A549 (cell line): ENCODE measurements at regions of chr2 and their contacts with region 1.

Region 1: GRCh38 chr2:85420536-85421259 is 2.2 kb downstream of the SH2D6 start:
- DNase-seq: peak; percentile 92 to 97
- ATAC-seq: peak; percentile 57 to 70
- H3K4me3 ChIP-seq: peak overlapping the region; percentile 16; the same call in 1 of the 3 replicates
- H3K27ac ChIP-seq: peak overlapping the region; percentile 96 to 98
- H3K4me1 ChIP-seq: peaks cover 44% of the 10 kb centered on the region
- CTCF ChIP-seq: peak; percentile 99
- EP300 ChIP-seq: no peak
- POLR2A ChIP-seq: no peak
- RAD21 ChIP-seq: peak; percentile 100

Region 2: DNA sequence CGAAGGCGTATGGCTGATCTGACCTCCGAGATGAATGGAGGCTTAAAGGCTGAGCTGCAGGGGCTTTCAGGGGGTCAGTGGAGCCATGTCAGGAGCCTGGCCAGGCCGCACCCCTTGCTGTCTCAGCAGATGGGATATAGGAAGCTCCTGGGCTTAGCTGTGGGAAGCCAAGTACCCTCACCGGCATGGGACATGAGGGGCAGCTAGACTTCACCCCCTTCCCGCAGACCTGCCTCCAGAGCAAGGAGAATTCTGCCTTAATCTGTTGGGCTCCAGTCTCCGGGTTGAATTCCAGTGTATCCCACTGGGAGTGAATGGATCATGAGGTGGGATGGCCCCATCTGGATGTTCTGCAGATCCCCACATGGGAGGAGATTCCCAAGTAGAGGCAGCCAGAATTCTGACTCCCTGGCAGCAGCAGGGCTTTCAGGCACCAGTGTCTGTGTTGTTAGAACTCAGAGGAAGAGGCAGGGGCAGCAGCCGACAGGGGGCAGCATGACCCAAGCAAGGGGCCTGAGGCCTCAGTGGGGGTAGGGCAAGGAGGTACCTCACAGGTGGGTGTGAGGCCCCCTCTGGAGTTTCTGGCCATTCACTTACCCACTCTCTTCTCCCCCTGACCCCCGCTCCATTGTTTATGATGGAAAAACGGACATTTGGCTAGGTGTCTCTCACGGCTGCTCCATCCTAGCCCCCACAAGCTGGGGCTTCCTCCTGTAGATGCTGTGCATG is 29.6 kb before region 1 on chr2:
- CTCF ChIA-PET with region 1: interaction called, 31 read pairs
- POLR2A ChIA-PET with region 1: no interaction called
- DNase-seq: peak; percentile 71 to 85
- ATAC-seq: peak; percentile 79 to 92
- H3K4me3 ChIP-seq: no peak overlapping the region
- H3K27ac ChIP-seq: no peak overlapping the region
- H3K4me1 ChIP-seq: peaks cover 6% of the 10 kb centered on the region; the same call in 2 of the 3 replicates
- CTCF ChIP-seq: peak; percentile 83
- EP300 ChIP-seq: no peak
- POLR2A ChIP-seq: no peak
- RAD21 ChIP-seq: peak; percentile 93 to 98

Region 3: GRCh38 chr2:85409845-85410583 is 10.7 kb before region 1 on chr2 and contains the start of gene CAPG:
- CTCF ChIA-PET with region 1: interaction called, 18 read pairs
- POLR2A ChIA-PET with region 1: no interaction called
- DNase-seq: peak in 1 of 2 experiments; percentile 55
- ATAC-seq: peak; percentile 31 to 59; a peak in 4 of 6 replicates
- H3K4me3 ChIP-seq: no peak within 1 kb of the TSS
- H3K27ac ChIP-seq: peak within 1 kb of the TSS; percentile 52 to 78
- H3K4me1 ChIP-seq: peaks cover 38% of the 10 kb centered on the region
- CTCF ChIP-seq: no peak
- EP300 ChIP-seq: no peak
- POLR2A ChIP-seq: peak; percentile 26
- RAD21 ChIP-seq: no peak
- polyA plus RNA-seq, gene CAPG: 81.0 and 94.6 TPM in 2 replicates

Region 4: DNA sequence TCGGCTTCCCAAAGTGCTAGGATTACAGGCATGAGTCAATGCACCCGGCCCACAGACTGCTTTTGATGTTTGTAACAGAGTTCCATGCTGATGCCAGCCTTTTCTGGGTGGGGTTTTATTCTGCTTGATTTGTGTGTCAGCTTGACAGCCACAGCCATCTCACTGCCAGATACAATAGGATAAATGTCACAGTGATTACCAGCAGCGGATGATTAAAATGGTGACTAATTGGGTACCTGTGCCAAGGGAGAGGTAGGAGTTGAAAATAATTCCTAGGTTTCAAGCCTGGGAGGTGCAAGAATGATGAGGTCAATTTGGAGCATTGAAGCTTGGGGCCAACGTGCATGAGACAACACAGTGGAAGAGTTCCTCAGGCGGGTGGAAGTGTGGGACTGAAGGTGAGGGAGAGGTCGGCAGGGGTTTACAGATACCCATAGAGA is 37.2 kb after region 1 on chr2:
- CTCF ChIA-PET with region 1: interaction called, 32 read pairs
- POLR2A ChIA-PET with region 1: interaction called, 6 read pairs
- DNase-seq: peak in 1 of 2 experiments; percentile 75
- ATAC-seq: peak; percentile 60 to 64; a peak in 4 of 6 replicates
- H3K4me3 ChIP-seq: no peak overlapping the region
- H3K27ac ChIP-seq: peak overlapping the region; percentile 48 to 77
- H3K4me1 ChIP-seq: peaks cover 31% of the 10 kb centered on the region
- CTCF ChIP-seq: no peak
- EP300 ChIP-seq: peak in 1 of 2 experiments; percentile 38; a peak in 1 of 5 replicates
- POLR2A ChIP-seq: no peak
- RAD21 ChIP-seq: peak; percentile 1 to 12; a peak in 1 of 5 replicates

Region 5: DNA sequence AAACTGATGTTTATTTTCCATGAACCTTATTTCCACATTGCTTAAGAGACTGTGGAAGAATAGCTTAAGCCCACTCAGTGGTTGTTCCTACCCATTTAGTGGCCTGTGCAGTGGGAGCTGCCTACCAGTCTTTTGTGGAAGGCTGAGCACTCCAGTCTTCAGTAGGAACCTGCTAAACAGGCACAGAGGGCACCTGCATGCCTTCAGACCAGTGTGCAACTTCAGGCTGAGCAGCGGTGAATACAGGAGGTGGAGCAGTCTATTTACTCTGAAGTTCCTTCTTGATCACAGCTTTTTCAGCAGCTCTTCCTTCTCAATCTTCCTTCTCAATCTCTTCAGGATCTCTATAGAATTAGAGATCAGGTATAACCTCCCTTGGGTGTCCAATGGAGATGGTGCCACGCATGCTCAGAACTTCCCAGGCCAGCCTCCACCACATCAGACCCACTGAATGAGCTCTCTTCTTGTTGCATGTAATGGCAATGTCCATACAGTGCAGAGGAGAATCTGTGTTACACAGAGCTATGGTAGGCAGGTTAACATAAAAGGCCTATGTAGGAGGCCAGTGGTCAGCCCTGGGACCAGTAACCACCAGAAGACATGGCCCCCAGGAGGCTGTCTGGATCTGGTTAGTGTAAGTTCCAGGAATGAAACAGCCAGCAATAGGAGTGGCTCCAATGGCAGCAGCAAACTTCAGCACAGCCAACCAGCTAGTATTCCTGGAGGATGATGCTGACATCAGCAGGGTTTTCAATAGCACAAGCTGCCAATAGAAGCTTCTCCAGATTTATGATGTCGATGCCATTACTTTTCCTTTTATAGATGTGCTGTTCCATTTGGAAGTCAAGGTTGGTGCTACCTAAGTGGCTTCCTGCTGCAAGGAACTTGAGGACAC is 70.4 kb after region 1 on chr2:
- CTCF ChIA-PET with region 1: interaction called, 10 read pairs
- POLR2A ChIA-PET with region 1: no interaction called
- DNase-seq: no peak
- ATAC-seq: peak; percentile 24 to 70; a peak in 3 of 6 replicates
- H3K4me3 ChIP-seq: no peak overlapping the region
- H3K27ac ChIP-seq: peak overlapping the region in 1 of 2 experiments; percentile 34; a peak in 2 of 6 replicates
- H3K4me1 ChIP-seq: peaks cover 2% of the 10 kb centered on the region; the same call in 2 of the 3 replicates
- CTCF ChIP-seq: no peak
- EP300 ChIP-seq: no peak
- POLR2A ChIP-seq: no peak
- RAD21 ChIP-seq: no peak

Region 6: GRCh38 chr2:85524336-85524933 is 103.7 kb after region 1 on chr2:
- CTCF ChIA-PET with region 1: interaction called, 1,185 read pairs
- POLR2A ChIA-PET with region 1: interaction called, 3 read pairs
- DNase-seq: no peak
- ATAC-seq: peak; percentile 66 to 77; a peak in 5 of 6 replicates
- H3K4me3 ChIP-seq: no peak overlapping the region
- H3K27ac ChIP-seq: peak overlapping the region; percentile 9 to 65; a peak in 4 of 6 replicates
- H3K4me1 ChIP-seq: peaks cover 23% of the 10 kb centered on the region
- CTCF ChIP-seq: no peak
- EP300 ChIP-seq: no peak
- POLR2A ChIP-seq: no peak
- RAD21 ChIP-seq: no peak

Region 7: GRCh38 chr2:85561317-85561979 is 140.8 kb after region 1 on chr2 and contains the start of gene GGCX:
- CTCF ChIA-PET with region 1: interaction called, 1,185 read pairs
- POLR2A ChIA-PET with region 1: interaction called, 21 read pairs
- DNase-seq: peak; percentile 89 to 97
- ATAC-seq: peak; percentile 96 to 98
- H3K4me3 ChIP-seq: peak within 1 kb of the TSS; percentile 91
- H3K27ac ChIP-seq: peak within 1 kb of the TSS; percentile 90
- H3K4me1 ChIP-seq: peaks cover 13% of the 10 kb centered on the region
- CTCF ChIP-seq: no peak
- EP300 ChIP-seq: no peak
- POLR2A ChIP-seq: peak; percentile 88
- RAD21 ChIP-seq: no peak; a peak in 2 of 5 replicates
- polyA plus RNA-seq, gene GGCX: 39.0 and 49.6 TPM in 2 replicates